Psoas muscle (tissue), 8 donors: ENCODE measurements at regions of chr21 and their contacts with region 1.

Region 1: DNA sequence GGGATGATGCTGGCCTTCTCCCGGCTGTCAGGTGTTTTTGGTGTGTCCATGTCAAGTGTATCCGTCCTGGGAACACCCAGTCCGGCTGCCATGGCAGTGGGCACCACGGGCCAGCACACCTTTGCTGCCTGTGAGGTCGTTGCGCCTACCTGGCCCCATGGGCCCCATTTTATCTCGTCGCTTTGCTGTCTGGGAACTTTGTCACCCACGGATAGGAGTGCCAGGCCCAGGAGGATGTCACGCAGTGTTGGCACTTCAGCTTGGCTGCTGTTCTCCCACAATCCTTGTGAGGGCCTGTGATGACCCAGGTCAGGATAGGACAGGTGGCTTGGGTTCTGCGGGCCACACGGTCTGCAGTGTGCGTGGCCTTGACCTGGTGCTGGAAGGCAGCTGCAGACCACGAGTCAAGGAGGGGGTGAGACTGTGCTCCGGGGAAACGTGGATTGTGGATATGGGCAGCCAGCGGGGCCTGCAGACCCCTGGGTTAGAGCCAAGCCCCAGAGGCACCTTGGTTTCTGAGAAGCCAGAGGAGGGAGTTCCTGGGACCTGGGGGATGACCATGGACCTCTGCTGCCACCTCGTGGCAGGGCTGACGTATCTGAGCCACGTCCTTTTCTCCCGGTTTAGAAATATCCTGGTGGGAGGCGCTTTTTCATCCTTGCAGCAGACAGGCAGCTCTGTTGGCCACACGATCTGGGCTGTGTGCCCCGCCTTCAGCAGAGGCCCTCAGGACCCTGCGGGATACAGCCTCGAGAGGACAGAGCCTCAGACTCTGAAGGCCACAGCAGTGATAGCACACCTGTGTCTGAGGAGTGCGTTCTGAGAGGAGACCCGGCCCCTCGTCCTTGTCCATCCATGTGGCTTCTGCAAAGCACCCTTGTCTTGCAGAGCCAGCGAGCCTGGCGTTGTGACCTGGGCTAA is 161.1 kb upstream of the COL6A1 start:
- DNase-seq: peak; percentile 71 to 84
- ATAC-seq: peak; percentile 72 to 85 (median 78)
- H3K4me3 ChIP-seq: no peak overlapping the region
- H3K27ac ChIP-seq: no peak overlapping the region
- H3K4me1 ChIP-seq: no peaks in the 10 kb centered on the region
- H3K27me3 ChIP-seq: peaks cover 0 to 33% (median 7%) of the 10 kb centered on the region in 3 donors
- CTCF ChIP-seq: peak; percentile 78

Region 2: GRCh38 chr21:45596704-45597318 is 223.6 kb before region 1 on chr21:
- intact Hi-C with region 1: loop called in 1 of 2 experiments (anchors 2 kb)
- DNase-seq: peak; percentile 69 to 75
- ATAC-seq: peak in 3 of 4 donors; percentile 63 to 76 (median 68)
- H3K4me3 ChIP-seq: no peak overlapping the region
- H3K27ac ChIP-seq: no peak overlapping the region
- H3K4me1 ChIP-seq: no peaks in the 10 kb centered on the region
- H3K27me3 ChIP-seq: peaks cover 0 to 34% (median 9%) of the 10 kb centered on the region in 3 donors
- CTCF ChIP-seq: peak; percentile 56